ENCODE measurements at regions of chr19 and their contacts with region 1.

Region 1: DNA sequence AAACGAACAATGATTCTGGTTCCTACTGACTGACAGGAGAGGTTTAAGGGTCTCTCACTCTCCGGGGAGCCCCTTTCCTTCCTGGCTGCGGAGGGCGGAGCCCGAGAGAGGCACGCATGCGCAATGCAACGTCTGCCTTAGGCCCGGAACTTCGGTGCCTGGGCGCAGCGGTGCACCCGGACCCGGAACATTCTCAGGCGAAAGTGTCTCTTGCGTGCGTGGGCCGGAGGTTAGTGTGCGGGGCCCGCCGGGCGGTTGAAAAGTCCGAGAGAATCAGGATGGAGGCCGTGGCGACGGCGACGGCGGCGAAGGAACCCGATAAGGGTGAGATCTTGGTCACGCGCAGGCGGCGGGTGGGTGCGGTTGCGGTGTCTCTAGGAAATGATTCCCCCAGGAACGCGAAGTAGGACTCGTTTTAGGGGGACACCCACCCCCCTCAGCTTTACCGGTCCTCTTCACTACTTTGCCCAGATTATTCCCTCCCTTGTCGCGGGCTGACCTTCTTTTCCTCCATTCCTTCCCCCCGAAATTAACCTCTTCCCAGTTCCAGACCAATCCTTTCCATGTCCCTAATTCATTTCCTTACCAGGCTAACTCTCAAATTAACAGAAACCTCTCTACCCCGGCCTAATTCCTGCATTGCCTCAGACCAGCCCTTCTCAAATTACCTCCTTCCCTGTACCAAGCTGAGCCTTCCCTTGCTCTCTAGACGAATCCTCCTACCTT is at the start of gene CCDC97:
- DNase-seq: peak; percentile 89 to 96
- H3K4me3 ChIP-seq: peak within 1 kb of the TSS; percentile 62 to 76 (median 64)
- H3K27ac ChIP-seq: peak within 1 kb of the TSS; percentile 93 to 98 (median 95)
- H3K4me1 ChIP-seq: peaks cover 34 to 73% (median 51%) of the 10 kb centered on the region in 4 donors
- H3K27me3 ChIP-seq: no peaks in the 10 kb centered on the region
- CTCF ChIP-seq: peak in 1 of 7 experiments; percentile 26
- EP300 ChIP-seq: no peak
- POLR2A ChIP-seq: peak in 1 of 4 donors; percentile 16
- total RNA-seq, gene CCDC97: 2.2 to 62.6 (median 19.7) TPM

Region 2: DNA sequence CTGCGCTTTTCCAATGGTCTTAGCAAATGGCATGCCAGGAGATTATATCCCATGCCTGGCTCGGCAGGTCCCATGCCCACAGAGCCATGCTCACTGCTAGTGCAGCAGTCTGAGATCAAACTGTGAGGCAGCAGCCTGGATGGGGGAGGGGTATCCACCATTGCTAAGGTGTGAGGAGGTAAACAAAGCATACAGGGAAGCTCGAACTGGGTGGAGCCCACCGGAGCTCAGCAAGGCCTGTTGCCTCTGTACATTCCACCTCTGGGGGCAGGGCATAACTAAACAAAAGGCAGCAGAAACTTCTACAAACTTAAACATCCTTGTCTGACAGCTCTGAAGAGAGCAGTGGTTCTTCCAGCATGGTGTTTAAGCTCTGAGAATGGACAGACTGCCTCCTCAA is 211.4 kb before region 1 on chr19:
- intact Hi-C with region 1: no loop called
- DNase-seq: peak in 1 of 2 donors; percentile 46
- H3K4me3 ChIP-seq: no peak overlapping the region
- H3K27ac ChIP-seq: no peak overlapping the region
- H3K4me1 ChIP-seq: no peaks in the 10 kb centered on the region
- H3K27me3 ChIP-seq: peaks cover 0 to 36% (median 6%) of the 10 kb centered on the region in 3 donors
- CTCF ChIP-seq: no peak
- EP300 ChIP-seq: no peak
- POLR2A ChIP-seq: no peak

Region 3: GRCh38 chr19:41206926-41207750 is 103.1 kb before region 1 on chr19:
- intact Hi-C with region 1: loop called (anchors 5 kb)
- DNase-seq: peak; percentile 34 to 79
- H3K4me3 ChIP-seq: peak overlapping the region in 1 of 4 donors; percentile 9
- H3K27ac ChIP-seq: peak overlapping the region; percentile 24 to 58 (median 44)
- H3K4me1 ChIP-seq: peaks cover 0 to 21% (median 4%) of the 10 kb centered on the region in 4 donors
- H3K27me3 ChIP-seq: no peaks in the 10 kb centered on the region
- CTCF ChIP-seq: no peak
- EP300 ChIP-seq: no peak
- POLR2A ChIP-seq: no peak

Region 4: GRCh38 chr19:41263850-41264580 is 46.2 kb before region 1 on chr19 and contains the start of gene HNRNPUL1:
- intact Hi-C with region 1: loop called (anchors 10 kb)
- DNase-seq: peak; percentile 98 to 100
- H3K4me3 ChIP-seq: peak within 1 kb of the TSS; percentile 79 to 96 (median 90)
- H3K27ac ChIP-seq: peak within 1 kb of the TSS; percentile 98 to 100 (median 99)
- H3K4me1 ChIP-seq: peaks cover 22 to 44% (median 36%) of the 10 kb centered on the region in 4 donors
- H3K27me3 ChIP-seq: no peaks in the 10 kb centered on the region
- CTCF ChIP-seq: peak in 2 of 7 experiments; percentile 22 to 29
- EP300 ChIP-seq: no peak
- POLR2A ChIP-seq: no peak
- total RNA-seq, gene HNRNPUL1: 47.8 to 319 (median 104) TPM

Region 5: DNA sequence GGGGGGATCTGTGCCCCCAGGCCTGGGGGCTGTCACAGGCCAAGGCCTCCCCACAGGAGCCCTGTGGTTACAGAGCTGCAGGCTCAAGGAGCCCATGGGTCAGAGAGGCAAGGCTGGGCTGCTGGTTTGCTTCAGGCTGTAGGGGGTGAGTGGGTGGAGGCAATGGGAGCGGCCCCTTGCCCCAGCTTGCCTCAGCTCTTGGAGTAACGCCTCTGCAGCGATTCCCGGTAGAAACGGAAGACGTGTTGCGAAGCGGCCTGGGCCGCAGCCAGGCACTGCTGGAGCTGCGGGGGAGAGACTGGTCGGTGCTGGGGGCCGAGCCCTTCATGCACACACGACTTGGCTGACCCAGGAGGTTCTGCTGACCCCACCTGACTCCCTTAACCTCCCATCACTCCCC is 76.2 kb after region 1 on chr19:
- intact Hi-C with region 1: no loop called
- DNase-seq: no peak
- H3K4me3 ChIP-seq: no peak overlapping the region
- H3K27ac ChIP-seq: no peak overlapping the region
- H3K4me1 ChIP-seq: no peaks in the 10 kb centered on the region
- H3K27me3 ChIP-seq: no peaks in the 10 kb centered on the region
- CTCF ChIP-seq: no peak
- EP300 ChIP-seq: no peak
- POLR2A ChIP-seq: no peak

Region 6: GRCh38 chr19:41397086-41398049 is 87.2 kb after region 1 on chr19 and contains the starts of genes BCKDHA and EXOSC5:
- intact Hi-C with region 1: no loop called
- DNase-seq: peak; percentile 100
- H3K4me3 ChIP-seq: peak within 1 kb of the TSS; percentile 68 to 92 (median 82)
- H3K27ac ChIP-seq: peak within 1 kb of the TSS; percentile 81 to 89 (median 88)
- H3K4me1 ChIP-seq: peaks cover 10 to 43% (median 35%) of the 10 kb centered on the region in 4 donors
- H3K27me3 ChIP-seq: no peaks in the 10 kb centered on the region
- CTCF ChIP-seq: peak in 1 of 7 experiments; percentile 26
- EP300 ChIP-seq: no peak
- POLR2A ChIP-seq: no peak
- total RNA-seq, gene BCKDHA: 1.8 to 55.4 (median 23.0) TPM
- total RNA-seq, gene EXOSC5: 4.8 to 131 (median 18.7) TPM

Region 7: GRCh38 chr19:41426952-41427646 is 116.9 kb after region 1 on chr19 and contains the start of gene B3GNT8:
- intact Hi-C with region 1: no loop called
- DNase-seq: peak; percentile 86 to 95
- H3K4me3 ChIP-seq: peak within 1 kb of the TSS; percentile 46 to 56 (median 51)
- H3K27ac ChIP-seq: peak within 1 kb of the TSS; percentile 71 to 87 (median 80)
- H3K4me1 ChIP-seq: peaks cover 27 to 52% (median 47%) of the 10 kb centered on the region in 4 donors
- H3K27me3 ChIP-seq: no peaks in the 10 kb centered on the region
- CTCF ChIP-seq: no peak
- EP300 ChIP-seq: no peak
- POLR2A ChIP-seq: no peak
- total RNA-seq, gene B3GNT8: 0.92 to 158 (median 1.7) TPM in 3 of 5 donors, not detected in the others

Measured in stomach (tissue), 19 donors.